GM18951 (cell line): ENCODE measurements at regions of chr6 and their contacts with region 1.

Region 1: GRCh38 chr6:72411872-72412708 is 209.8 kb upstream of the KCNQ5 start:
- POLR2A ChIP-seq: no peak

Region 2: GRCh38 chr6:72182337-72183246 is 229.5 kb before region 1 on chr6:
- in situ Hi-C with region 1: no loop called
- POLR2A ChIP-seq: no peak

Region 3: GRCh38 chr6:72547020-72547419 is 134.9 kb after region 1 on chr6:
- in situ Hi-C with region 1: no loop called
- POLR2A ChIP-seq: no peak

Region 4: DNA sequence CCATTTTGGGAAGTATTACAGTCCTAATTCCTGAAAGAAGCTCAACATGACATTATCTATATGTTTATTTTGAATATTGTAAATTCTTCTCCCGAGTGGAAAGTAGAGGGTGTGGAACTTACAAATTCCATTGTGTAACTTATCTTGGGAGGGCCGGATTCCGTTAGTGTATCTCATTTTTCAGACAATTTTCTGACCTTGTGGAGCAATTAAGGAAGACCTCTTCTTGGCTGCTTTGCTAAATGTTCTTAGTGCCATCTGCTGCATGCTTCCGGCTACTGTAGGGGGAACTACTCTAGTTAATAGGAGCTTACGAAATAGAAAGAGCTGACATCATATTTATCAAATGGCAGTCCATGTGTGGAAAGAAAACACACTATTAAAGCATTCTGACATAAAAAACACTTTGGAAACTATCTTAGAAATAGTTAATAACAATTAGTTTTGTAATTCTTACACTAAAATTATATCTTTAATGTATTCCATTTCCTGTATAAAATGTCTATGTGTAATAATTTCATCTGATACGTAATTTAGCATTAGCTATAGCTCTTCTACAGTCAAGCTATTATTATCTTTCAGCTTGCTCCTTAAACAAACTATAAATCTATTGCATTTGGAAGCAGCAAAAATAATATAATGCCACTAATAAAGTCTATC is 168.3 kb after region 1 on chr6:
- in situ Hi-C with region 1: loop called (anchors 25 kb)
- POLR2A ChIP-seq: no peak

Region 5: DNA sequence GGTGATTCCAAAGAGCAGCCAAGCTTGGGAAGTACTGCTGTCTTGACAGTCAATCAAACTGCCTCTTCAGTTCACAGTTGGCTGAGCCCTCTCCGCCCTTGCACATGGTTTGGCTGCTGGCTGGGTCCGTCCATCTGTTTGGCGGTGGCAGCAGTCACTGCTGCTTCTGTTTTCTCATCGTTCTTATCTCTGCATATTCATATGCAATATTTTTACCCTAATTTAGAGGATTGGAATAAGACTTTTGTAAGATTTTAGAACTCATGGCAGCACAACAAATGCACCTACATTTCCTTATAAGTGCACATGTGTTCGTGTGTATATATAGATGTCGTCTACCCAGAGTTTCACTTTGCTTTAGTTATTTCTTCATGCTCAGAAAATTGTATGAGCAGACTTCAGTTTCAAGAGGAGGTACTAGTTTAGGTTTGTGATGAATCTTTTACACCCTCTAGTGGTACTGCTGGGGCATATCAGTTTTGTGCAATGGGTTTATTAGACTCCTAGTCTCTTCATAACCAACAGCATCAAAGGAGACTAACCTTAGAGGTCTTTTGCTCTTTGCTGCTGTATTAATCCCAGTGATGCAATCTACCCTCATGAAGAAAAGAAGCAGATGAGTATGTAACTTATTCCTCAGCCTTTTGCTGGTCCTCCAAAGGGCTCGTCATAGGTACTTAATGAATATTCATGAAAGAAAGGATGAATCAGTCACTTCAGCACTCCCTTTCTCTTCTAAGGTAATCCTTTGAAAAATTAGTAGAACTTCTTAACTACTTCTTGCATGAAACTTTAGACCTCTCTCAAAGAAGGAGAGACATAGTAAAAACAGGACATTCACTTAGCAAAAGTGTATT is 768.9 kb after region 1 on chr6:
- in situ Hi-C with region 1: loop called (anchors 10 kb)
- POLR2A ChIP-seq: no peak

Region 6: DNA sequence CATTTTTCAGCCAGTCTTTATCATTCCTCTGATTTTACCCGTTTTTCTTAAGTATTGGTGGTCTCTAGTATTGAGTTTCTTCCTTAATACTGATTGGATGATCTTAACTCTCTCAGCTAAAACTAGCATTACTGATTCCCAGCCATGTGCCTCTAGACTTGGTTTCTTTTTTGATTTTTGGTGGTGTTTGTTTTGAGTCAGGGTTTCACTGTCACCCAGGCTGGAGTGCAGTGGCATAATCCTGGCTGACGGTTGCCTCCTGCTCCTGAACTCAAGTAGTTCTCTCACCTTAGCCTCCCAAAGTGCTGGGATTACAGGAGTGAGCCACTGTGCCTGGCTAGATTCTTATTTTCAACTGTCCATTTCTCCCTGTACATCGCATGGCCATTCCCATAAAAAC is 917.1 kb after region 1 on chr6:
- in situ Hi-C with region 1: loop called (anchors 10 kb)
- POLR2A ChIP-seq: no peak